CD8-positive, alpha-beta T cell (primary cell): ENCODE measurements at regions of chrX and their contacts with region 1.

Region 1: GRCh38 chrX:19904778-19905367 is 17.5 kb upstream of the SH3KBP1 start:
- DNase-seq: peak in 4 of 9 experiments; percentile 9 to 71 (median 38)
- ATAC-seq: peak; percentile 69
- H3K4me3 ChIP-seq: no peak overlapping the region
- H3K4me3 Mint-ChIP-seq: no peak overlapping the region
- H3K27ac ChIP-seq: no peak overlapping the region
- H3K27ac Mint-ChIP-seq: no peak overlapping the region
- H3K4me1 ChIP-seq: no peaks in the 10 kb centered on the region
- H3K4me1 Mint-ChIP-seq: peaks cover 6% of the 10 kb centered on the region
- H3K27me3 ChIP-seq: no peaks in the 10 kb centered on the region
- H3K27me3 Mint-ChIP-seq: no peaks in the 10 kb centered on the region
- CTCF ChIP-seq: peak; percentile 43

Region 2: DNA sequence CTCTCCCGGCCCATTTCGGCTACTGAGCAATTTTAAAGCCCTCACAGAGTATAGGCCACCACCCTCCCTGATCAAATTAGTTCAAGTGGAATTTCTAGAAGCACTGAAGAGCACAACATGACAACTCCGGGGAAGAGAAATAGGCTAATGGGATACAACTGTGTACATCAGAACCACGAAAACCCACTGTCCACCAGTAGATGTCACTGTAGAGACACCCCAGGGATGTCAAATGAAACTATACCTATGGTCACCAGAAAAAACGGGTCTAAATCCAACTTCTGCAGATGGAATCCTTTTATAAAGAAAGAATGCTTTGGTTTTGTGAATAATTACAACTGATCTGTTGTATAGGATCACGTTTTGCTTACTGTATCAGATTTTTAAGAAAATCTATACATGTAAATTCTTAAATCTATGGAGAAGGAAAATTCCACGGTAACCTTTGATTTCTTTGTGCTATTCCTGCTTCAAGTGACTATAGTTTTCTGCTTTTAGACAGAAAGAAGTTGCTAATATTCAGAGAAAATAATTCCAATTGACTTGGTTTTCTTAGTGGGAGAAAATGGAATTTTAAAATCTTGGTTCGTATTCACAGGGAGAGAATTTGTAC is 360.1 kb before region 1 on chrX:
- CTCF ChIA-PET with region 1: no interaction called
- POLR2A ChIA-PET with region 1: no interaction called
- intact Hi-C with region 1: loop called in 1 of 2 experiments (anchors 5 kb)
- DNase-seq: peak in 5 of 9 experiments; percentile 24 to 68 (median 30)
- ATAC-seq: peak; percentile 56
- H3K4me3 ChIP-seq: no peak overlapping the region
- H3K4me3 Mint-ChIP-seq: no peak overlapping the region
- H3K27ac ChIP-seq: no peak overlapping the region
- H3K27ac Mint-ChIP-seq: peak overlapping the region; percentile 73
- H3K4me1 ChIP-seq: no peaks in the 10 kb centered on the region
- H3K4me1 Mint-ChIP-seq: peaks cover 2% of the 10 kb centered on the region
- H3K27me3 ChIP-seq: no peaks in the 10 kb centered on the region
- H3K27me3 Mint-ChIP-seq: no peaks in the 10 kb centered on the region
- CTCF ChIP-seq: peak; percentile 44

Region 3: GRCh38 chrX:19947612-19948011 is 42.7 kb after region 1 on chrX:
- CTCF ChIA-PET with region 1: no interaction called
- POLR2A ChIA-PET with region 1: no interaction called
- intact Hi-C with region 1: no loop called
- DNase-seq: no peak
- ATAC-seq: no peak
- H3K4me3 ChIP-seq: no peak overlapping the region
- H3K4me3 Mint-ChIP-seq: no peak overlapping the region
- H3K27ac ChIP-seq: no peak overlapping the region
- H3K27ac Mint-ChIP-seq: no peak overlapping the region
- H3K4me1 ChIP-seq: no peaks in the 10 kb centered on the region
- H3K4me1 Mint-ChIP-seq: peaks cover 8% of the 10 kb centered on the region
- H3K27me3 ChIP-seq: no peaks in the 10 kb centered on the region
- H3K27me3 Mint-ChIP-seq: no peaks in the 10 kb centered on the region
- CTCF ChIP-seq: no peak

Region 4: GRCh38 chrX:20066968-20067708 is 162.3 kb after region 1 on chrX:
- CTCF ChIA-PET with region 1: interaction called, 22 read pairs
- POLR2A ChIA-PET with region 1: no interaction called
- intact Hi-C with region 1: loop called (anchors 1 kb)
- DNase-seq: peak in 6 of 9 experiments; percentile 0 to 60 (median 16)
- ATAC-seq: peak; percentile 63
- H3K4me3 ChIP-seq: no peak overlapping the region
- H3K4me3 Mint-ChIP-seq: no peak overlapping the region
- H3K27ac ChIP-seq: no peak overlapping the region
- H3K27ac Mint-ChIP-seq: no peak overlapping the region
- H3K4me1 ChIP-seq: no peaks in the 10 kb centered on the region
- H3K4me1 Mint-ChIP-seq: no peaks in the 10 kb centered on the region
- H3K27me3 ChIP-seq: no peaks in the 10 kb centered on the region
- H3K27me3 Mint-ChIP-seq: no peaks in the 10 kb centered on the region
- CTCF ChIP-seq: peak; percentile 31

Region 5: DNA sequence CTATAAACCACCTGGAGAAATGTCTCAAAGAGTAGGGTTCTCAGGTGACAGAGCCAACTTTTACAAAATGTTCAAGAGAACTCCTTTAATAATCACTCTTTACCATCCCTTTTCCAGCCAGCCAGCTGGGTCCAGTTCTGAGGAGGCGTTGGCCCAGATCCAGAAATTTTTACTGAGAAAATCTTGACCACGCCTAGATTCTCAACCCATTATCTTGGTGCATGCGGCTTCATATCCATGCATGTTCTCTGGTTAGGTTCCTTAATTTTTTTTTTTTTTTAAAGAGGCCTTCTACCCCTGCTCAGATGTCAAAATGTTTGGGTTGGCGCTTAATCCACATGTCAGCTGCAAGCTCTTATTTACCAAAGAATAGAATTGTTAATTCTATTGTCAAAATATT is 223.8 kb after region 1 on chrX:
- CTCF ChIA-PET with region 1: interaction called, 3 read pairs
- POLR2A ChIA-PET with region 1: no interaction called
- intact Hi-C with region 1: loop called (anchors 1 to 5 kb)
- DNase-seq: no peak
- ATAC-seq: no peak
- H3K4me3 ChIP-seq: no peak overlapping the region
- H3K4me3 Mint-ChIP-seq: no peak overlapping the region
- H3K27ac ChIP-seq: no peak overlapping the region
- H3K27ac Mint-ChIP-seq: no peak overlapping the region
- H3K4me1 ChIP-seq: no peaks in the 10 kb centered on the region
- H3K4me1 Mint-ChIP-seq: peaks cover 2% of the 10 kb centered on the region
- H3K27me3 ChIP-seq: no peaks in the 10 kb centered on the region
- H3K27me3 Mint-ChIP-seq: no peaks in the 10 kb centered on the region
- CTCF ChIP-seq: no peak

Region 6: DNA sequence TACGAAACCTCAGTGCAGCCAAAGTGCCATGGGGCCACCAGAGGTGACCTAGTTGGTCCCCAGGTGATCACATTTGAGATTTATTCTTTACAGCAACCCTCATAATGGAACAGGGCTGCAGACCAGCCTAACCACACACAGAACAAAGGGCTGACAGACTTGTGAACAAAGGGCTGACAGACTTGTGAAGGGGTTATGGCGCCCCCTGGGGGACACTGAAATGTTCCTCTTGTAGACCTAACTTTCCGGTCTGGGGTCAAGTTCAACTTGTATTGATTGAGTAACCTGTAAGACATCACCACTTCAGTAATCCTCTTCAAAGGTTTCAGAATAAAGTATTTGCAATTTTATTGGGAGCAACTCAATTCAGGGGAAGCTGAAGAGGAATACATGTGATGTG is 537.7 kb after region 1 on chrX:
- CTCF ChIA-PET with region 1: no interaction called
- POLR2A ChIA-PET with region 1: no interaction called
- intact Hi-C with region 1: loop called in 1 of 2 experiments (anchors 10 kb)
- DNase-seq: peak; percentile 64 to 89 (median 87)
- ATAC-seq: peak; percentile 70
- H3K4me3 ChIP-seq: no peak overlapping the region
- H3K4me3 Mint-ChIP-seq: no peak overlapping the region
- H3K27ac ChIP-seq: no peak overlapping the region
- H3K27ac Mint-ChIP-seq: no peak overlapping the region
- H3K4me1 ChIP-seq: peaks cover 63% of the 10 kb centered on the region
- H3K4me1 Mint-ChIP-seq: peaks cover 58% of the 10 kb centered on the region
- H3K27me3 ChIP-seq: no peaks in the 10 kb centered on the region
- H3K27me3 Mint-ChIP-seq: no peaks in the 10 kb centered on the region
- CTCF ChIP-seq: peak; percentile 63

Region 7: GRCh38 chrX:20542072-20542471 is 637.2 kb after region 1 on chrX:
- CTCF ChIA-PET with region 1: no interaction called
- POLR2A ChIA-PET with region 1: no interaction called
- intact Hi-C with region 1: no loop called
- DNase-seq: no peak
- ATAC-seq: no peak
- H3K4me3 ChIP-seq: no peak overlapping the region
- H3K4me3 Mint-ChIP-seq: no peak overlapping the region
- H3K27ac ChIP-seq: no peak overlapping the region
- H3K27ac Mint-ChIP-seq: no peak overlapping the region
- H3K4me1 ChIP-seq: no peaks in the 10 kb centered on the region
- H3K4me1 Mint-ChIP-seq: peaks cover 2% of the 10 kb centered on the region
- H3K27me3 ChIP-seq: no peaks in the 10 kb centered on the region
- H3K27me3 Mint-ChIP-seq: peaks cover under 1% of the 10 kb centered on the region
- CTCF ChIP-seq: no peak